PC-9 (cell line): ENCODE measurements at regions of chr7 and their contacts with region 1.

Region 1: DNA sequence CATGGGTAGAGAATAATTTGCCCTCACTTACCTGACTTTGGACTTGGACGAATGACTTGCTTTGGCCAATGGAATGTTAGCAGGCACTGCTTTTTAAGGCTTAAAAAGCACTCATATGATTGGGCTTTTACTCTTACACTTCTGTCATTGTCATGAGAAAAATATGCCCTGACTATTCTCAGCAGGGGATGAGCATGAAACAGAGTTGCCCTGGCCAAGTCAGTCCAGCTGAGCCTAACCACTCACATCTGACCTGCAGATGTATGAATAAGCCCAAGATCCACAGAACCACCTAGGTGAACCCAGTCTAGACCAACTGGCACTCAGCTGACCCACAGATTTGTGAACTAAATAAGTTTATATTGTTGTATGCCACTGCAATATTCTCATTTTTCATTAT is 573.5 kb downstream of the TNS3 start:
- DNase-seq: no peak
- H3K4me3 ChIP-seq: no peak overlapping the region
- H3K27ac ChIP-seq: no peak overlapping the region
- H3K4me1 ChIP-seq: no peaks in the 10 kb centered on the region
- H3K27me3 ChIP-seq: no peaks in the 10 kb centered on the region
- CTCF ChIP-seq: no peak

Region 2: GRCh38 chr7:46461334-46461777 is 547.1 kb before region 1 on chr7:
- CTCF ChIA-PET with region 1: no interaction called
- POLR2A ChIA-PET with region 1: interaction called, 16 read pairs
- intact Hi-C with region 1: no loop called
- DNase-seq: no peak
- H3K4me3 ChIP-seq: no peak overlapping the region
- H3K27ac ChIP-seq: no peak overlapping the region
- H3K4me1 ChIP-seq: no peaks in the 10 kb centered on the region
- H3K27me3 ChIP-seq: no peaks in the 10 kb centered on the region
- CTCF ChIP-seq: no peak

Region 3: DNA sequence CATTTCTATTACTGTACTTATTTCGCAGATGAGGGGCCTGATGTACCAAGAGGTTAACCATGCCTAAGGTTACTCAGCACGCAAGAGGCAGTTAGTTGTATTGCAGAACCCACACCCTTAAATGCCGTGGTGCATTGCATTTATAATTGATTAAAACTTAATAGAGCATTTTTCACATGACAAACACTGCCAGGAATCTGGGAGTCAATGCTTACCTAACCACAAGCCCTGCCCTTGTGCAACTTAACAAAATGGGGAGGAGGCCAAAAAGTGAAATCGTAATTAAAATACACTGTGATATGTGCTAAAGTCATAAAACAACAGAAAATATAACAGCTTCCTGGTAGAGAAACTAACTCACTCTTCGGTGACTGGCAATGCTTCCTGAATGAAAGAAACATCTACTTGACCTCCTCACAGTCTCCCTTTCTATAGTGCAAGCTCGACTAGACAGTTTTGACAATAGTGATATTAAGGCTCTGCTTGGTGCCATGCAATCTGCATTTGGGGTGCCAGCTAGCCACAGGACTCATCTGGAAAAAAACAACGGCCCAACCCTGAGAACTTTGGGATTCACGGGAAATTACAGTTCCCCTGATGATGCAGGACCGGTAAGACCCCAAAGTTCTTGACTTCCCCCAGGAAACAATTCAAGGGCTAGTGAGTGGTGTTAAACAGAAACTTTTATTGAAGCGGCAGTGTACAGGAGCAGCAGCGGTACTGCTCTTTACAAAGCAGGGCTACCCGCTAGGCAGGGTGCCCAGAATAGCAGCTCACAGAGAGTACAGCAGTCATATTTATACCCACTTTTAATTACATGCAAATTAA is 38.9 kb before region 1 on chr7:
- CTCF ChIA-PET with region 1: no interaction called
- POLR2A ChIA-PET with region 1: no interaction called
- intact Hi-C with region 1: no loop called
- DNase-seq: peak; percentile 38 to 82
- H3K4me3 ChIP-seq: no peak overlapping the region
- H3K27ac ChIP-seq: peak overlapping the region; percentile 37
- H3K4me1 ChIP-seq: peaks cover 24% of the 10 kb centered on the region
- H3K27me3 ChIP-seq: no peaks in the 10 kb centered on the region
- CTCF ChIP-seq: no peak

Region 4: GRCh38 chr7:47132471-47132870 is 124.0 kb after region 1 on chr7:
- CTCF ChIA-PET with region 1: no interaction called
- POLR2A ChIA-PET with region 1: no interaction called
- intact Hi-C with region 1: loop called (anchors 10 kb)
- DNase-seq: no peak
- H3K4me3 ChIP-seq: no peak overlapping the region
- H3K27ac ChIP-seq: no peak overlapping the region
- H3K4me1 ChIP-seq: no peaks in the 10 kb centered on the region
- H3K27me3 ChIP-seq: no peaks in the 10 kb centered on the region
- CTCF ChIP-seq: no peak